ENCODE measurements at regions of chr5 and their contacts with region 1.

Region 1: GRCh38 chr5:157265714-157266285 is at the start of gene CYFIP2:
- DNase-seq: peak in 1 of 2 donors; percentile 75
- H3K4me3 ChIP-seq: peak within 1 kb of the TSS; percentile 86 to 88
- H3K27ac ChIP-seq: no peak within 1 kb of the TSS
- H3K4me1 ChIP-seq: peaks cover 0 to 8% of the 10 kb centered on the region in 2 donors
- H3K27me3 ChIP-seq: no peaks in the 10 kb centered on the region
- CTCF ChIP-seq: no peak
- total RNA-seq, gene CYFIP2: 78.1 TPM

Region 2: DNA sequence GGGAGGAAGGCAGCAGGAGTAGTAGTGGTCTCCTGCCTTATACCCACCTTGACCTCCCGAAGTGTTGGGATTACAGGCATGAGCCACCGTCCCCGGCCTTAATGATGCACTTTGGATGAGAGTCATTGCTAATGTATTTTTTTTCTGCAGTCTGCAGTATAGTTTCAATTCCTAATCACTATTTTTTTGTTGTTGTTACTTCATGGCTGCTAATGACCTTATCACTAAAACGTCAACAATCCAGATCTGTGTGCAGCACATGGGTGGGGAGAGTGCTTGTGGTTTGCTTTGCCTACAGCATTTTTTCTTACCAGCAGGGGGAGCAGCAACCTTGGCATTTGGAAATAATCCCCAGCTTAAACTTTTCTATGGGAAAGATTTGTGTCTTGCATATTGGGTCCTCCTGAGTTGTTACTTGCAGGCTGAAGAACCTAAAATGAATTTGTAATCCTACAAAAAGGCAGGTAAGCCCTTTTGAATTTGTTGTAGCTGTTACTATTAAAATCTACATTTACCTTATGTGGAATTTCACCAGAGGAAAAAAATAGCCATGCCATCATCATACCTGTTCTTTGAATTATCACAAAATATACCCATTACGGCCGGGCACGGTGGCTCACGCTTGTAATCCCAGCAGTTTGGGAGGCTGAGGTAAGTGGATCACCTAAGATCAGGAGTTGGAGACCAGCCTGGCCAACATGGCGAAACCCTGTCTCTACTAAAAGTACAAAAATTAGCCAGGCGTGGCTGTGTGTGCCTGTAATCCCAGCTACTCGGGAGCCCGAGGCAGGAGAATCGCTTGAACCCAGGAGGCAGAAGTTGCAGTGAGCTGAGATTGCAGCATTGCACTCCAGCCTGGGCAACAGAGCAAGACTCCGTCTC is 116.8 kb before region 1 on chr5:
- intact Hi-C with region 1: loop called (anchors 5 kb)
- DNase-seq: peak in 1 of 2 donors; percentile 85
- H3K4me3 ChIP-seq: peak overlapping the region in 1 of 2 donors; percentile 48
- H3K27ac ChIP-seq: no peak overlapping the region
- H3K4me1 ChIP-seq: peaks cover under 1 to 8% of the 10 kb centered on the region in 2 donors
- H3K27me3 ChIP-seq: no peaks in the 10 kb centered on the region
- CTCF ChIP-seq: peak; percentile 64 to 88 (median 71)

Region 3: DNA sequence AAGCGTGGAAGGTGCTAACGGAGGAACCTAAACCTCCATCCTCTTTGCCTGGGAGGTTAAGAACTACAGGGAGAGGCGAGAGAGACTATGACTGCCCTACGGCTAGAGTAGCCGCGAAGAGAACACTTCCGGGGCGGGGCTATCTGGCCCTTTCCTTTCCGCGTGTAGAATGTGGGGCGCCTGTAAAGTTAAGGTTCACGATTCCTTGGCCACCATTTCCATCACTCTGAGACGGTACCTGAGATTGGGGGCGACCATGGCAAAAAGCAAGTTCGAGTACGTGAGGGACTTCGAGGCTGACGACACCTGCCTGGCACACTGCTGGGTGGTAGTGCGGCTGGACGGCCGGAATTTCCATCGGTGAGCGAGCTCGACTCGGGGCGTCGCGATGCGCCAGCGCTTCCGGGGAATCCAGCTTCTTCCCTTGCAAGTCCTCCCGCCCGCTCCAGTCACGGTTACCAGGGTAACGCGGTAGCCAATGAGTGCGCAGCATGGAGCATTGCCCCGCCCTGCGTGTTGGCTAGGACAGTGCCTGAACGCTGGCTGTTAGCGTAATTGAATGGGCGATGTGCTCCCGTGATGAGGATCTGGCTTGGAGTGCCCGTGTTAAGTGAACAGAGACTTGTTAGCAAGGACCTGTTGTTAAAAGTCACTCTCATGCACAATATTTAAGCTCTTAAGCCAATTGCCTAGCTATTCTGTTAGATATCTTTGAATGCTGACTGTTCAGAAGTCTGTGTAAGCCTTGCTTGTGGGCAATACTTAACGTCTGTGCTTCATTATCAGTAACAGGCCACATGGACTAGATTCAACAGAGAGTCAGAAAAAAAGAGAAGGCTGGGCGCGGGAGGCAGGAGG is 465.7 kb after region 1 on chr5 and contains the start of gene THG1L:
- intact Hi-C with region 1: loop called (anchors 5 kb)
- DNase-seq: peak; percentile 96 to 99
- H3K4me3 ChIP-seq: peak within 1 kb of the TSS; percentile 59 to 76
- H3K27ac ChIP-seq: peak within 1 kb of the TSS; percentile 87
- H3K4me1 ChIP-seq: no peaks in the 10 kb centered on the region
- H3K27me3 ChIP-seq: no peaks in the 10 kb centered on the region
- CTCF ChIP-seq: no peak
- total RNA-seq, gene THG1L: 0.32 TPM

Measured in ascending aorta (tissue), 2 donors.